ENCODE measurements at regions of chr9 and their contacts with region 1.

Region 1: GRCh38 chr9:71052287-71052686 is 69.1 kb downstream of the TRPM3 start:
- DNase-seq: no peak
- ATAC-seq: no peak
- H3K4me3 ChIP-seq: no peak overlapping the region
- H3K27ac ChIP-seq: no peak overlapping the region
- H3K4me1 ChIP-seq: no peaks in the 10 kb centered on the region
- H3K27me3 ChIP-seq: peaks cover 36% of the 10 kb centered on the region
- CTCF ChIP-seq: no peak
- POLR2A ChIP-seq: no peak
- RAD21 ChIP-seq: no peak

Region 2: DNA sequence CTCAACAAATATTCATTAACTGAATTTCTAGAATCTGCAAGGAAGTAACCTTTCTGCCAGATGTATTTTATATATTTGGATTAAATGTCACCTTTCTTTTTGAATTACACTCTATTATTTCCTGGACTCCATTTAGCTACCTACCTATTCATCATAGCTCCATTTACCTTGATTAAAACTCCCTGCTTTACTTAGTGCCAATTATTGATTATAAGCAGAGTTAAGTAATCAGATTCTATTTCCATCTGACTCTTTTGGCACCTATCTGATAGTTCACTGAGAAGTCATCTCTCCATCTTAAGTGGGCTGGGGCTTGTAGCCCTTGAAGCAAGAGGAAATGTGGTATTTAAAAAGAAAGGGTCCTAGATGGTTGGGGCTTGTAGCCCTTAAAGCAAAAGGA is 19.5 kb before region 1 on chr9:
- CTCF ChIA-PET with region 1: no interaction called
- POLR2A ChIA-PET with region 1: no interaction called
- RAD21 ChIA-PET with region 1: no interaction called
- intact Hi-C with region 1: loop called (anchors 1 kb)
- DNase-seq: no peak
- ATAC-seq: no peak
- H3K4me3 ChIP-seq: no peak overlapping the region
- H3K27ac ChIP-seq: no peak overlapping the region
- H3K4me1 ChIP-seq: no peaks in the 10 kb centered on the region
- H3K27me3 ChIP-seq: peaks cover 14% of the 10 kb centered on the region; the same call in 1 of the 2 replicates
- CTCF ChIP-seq: no peak
- POLR2A ChIP-seq: no peak
- RAD21 ChIP-seq: no peak